ENCODE measurements at regions of chr9 and their contacts with region 1.

Region 1: GRCh38 chr9:95206143-95206542 is 111.4 kb downstream of the FANCC start:
- DNase-seq: no peak
- H3K4me3 ChIP-seq: no peak overlapping the region
- H3K27ac ChIP-seq: no peak overlapping the region
- H3K4me1 ChIP-seq: no peaks in the 10 kb centered on the region
- H3K27me3 ChIP-seq: no peaks in the 10 kb centered on the region
- CTCF ChIP-seq: no peak

Region 2: GRCh38 chr9:95268681-95269080 is 62.5 kb after region 1 on chr9:
- CTCF ChIA-PET with region 1: no interaction called
- dilution Hi-C with region 1: no loop called
- in situ Hi-C with region 1: loop called in 1 of 2 experiments (anchors 10 kb)
- intact Hi-C with region 1: no loop called
- DNase-seq: peak; percentile 26
- H3K4me3 ChIP-seq: no peak overlapping the region
- H3K27ac ChIP-seq: no peak overlapping the region
- H3K4me1 ChIP-seq: no peaks in the 10 kb centered on the region
- H3K27me3 ChIP-seq: no peaks in the 10 kb centered on the region
- CTCF ChIP-seq: peak in 1 of 2 donors; percentile 52

Region 3: GRCh38 chr9:95678759-95679158 is 472.6 kb after region 1 on chr9:
- CTCF ChIA-PET with region 1: no interaction called
- dilution Hi-C with region 1: no loop called
- in situ Hi-C with region 1: no loop called
- intact Hi-C with region 1: no loop called
- DNase-seq: no peak
- H3K4me3 ChIP-seq: no peak overlapping the region
- H3K27ac ChIP-seq: no peak overlapping the region
- H3K4me1 ChIP-seq: no peaks in the 10 kb centered on the region
- H3K27me3 ChIP-seq: no peaks in the 10 kb centered on the region
- CTCF ChIP-seq: no peak